AG04450 (cell line): ENCODE measurements at regions of chr6 and their contacts with region 1.

Region 1: GRCh38 chr6:16540804-16541752 is 220.2 kb downstream of the ATXN1 start:
- DNase-seq: no peak
- H3K4me3 ChIP-seq: no peak overlapping the region
- H3K27ac ChIP-seq: no peak overlapping the region
- H3K27me3 ChIP-seq: no peaks in the 10 kb centered on the region
- CTCF ChIP-seq: peak; percentile 8; the same call in 1 of the 2 replicates

Region 2: DNA sequence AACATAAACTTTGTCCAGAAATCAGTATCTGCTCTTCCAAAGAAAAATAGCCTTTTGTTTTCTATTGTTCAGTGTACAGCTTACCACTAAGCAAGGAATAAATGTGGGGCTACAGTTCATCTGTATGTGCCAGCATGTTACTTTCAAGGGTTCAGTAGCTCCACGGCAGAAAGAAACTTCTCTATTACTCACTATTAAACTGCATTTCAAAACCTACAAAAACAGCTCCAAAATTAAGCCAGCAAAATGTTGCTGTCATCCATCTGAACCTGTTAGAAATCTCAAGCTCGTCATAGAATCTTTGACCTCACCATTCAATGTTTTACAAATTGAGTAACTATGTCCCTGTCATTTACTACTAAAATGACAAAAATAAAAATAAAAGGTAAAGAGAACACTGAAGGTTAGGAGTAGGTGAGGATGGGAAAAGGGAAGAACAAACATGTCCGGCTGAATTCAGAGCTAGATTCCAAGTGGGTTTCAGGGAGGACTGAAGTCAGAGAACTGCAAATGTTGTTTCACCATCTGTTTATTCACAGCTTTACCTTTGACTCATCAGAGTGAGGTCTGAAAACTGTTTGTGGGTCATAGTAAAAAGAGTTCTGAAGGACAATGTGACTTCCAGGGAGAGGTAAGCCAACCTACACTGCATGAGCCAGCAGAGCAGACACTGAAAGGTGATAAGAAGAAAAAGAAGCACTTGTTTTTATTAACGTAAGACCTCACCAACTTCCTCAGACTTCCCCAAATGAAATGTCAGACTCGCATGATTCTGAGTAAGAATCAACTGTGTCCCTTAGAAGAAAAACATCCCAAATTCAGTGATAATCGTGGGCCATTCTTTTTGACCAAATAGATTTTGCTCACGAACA is 158.2 kb after region 1 on chr6:
- CTCF ChIA-PET with region 1: no interaction called
- POLR2A ChIA-PET with region 1: interaction called, 10 read pairs
- DNase-seq: no peak
- H3K4me3 ChIP-seq: no peak overlapping the region
- H3K27ac ChIP-seq: peak overlapping the region; percentile 13
- H3K27me3 ChIP-seq: no peaks in the 10 kb centered on the region
- CTCF ChIP-seq: no peak